ENCODE measurements at regions of chr20 and their contacts with region 1.

Region 1: GRCh38 chr20:63178889-63179686 is 36.8 kb downstream of the YTHDF1 start:
- ATAC-seq: peak; percentile 36 to 66 (median 50)
- H3K4me3 ChIP-seq: peak overlapping the region; percentile 55 to 96 (median 88)
- H3K27ac ChIP-seq: peak overlapping the region; percentile 88 to 94
- H3K4me1 ChIP-seq: peaks cover 45 to 56% of the 10 kb centered on the region in 2 donors

Region 2: GRCh38 chr20:62900052-62900691 is 278.9 kb before region 1 on chr20:
- in situ Hi-C with region 1: no loop called
- ATAC-seq: peak; percentile 86 to 94 (median 89)
- H3K4me3 ChIP-seq: no peak overlapping the region
- H3K27ac ChIP-seq: no peak overlapping the region
- H3K4me1 ChIP-seq: peaks cover 14 to 15% of the 10 kb centered on the region in 2 donors

Region 3: DNA sequence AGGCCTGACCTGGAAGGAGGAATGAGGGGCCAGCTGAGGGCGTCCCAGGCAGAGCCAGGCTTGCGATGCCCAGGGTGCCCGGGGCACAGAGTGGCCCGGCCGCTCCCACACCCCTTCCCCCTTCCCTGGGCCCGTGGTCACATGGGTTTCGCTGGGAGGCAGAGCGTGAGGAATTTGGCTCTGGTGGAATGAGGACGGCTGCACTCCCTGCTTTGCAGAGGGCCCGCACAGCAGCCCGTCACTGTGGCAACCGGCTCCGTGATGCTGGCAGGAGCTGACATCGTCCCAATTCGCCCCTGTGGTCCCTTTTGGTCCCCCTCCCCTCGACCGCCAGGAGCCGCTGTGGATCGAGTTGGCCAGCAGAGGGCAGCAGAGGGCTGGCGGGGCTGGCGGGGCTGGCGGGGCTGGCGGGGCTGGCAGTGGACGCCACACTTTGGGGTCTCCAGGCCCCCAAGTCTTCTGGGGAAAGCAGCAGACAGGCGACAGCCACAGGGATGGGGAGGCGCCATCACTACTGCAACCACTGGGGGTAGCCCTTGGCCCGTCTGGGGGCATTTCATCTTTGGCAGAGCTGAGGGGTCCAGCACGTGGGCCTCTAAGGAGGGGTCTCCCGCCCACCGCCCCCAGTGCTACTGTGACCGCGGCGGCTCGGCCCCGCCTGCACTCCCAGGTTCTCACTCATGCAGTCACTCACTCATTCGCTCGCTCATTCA is 122.7 kb before region 1 on chr20:
- in situ Hi-C with region 1: loop called in 4 of 9 experiments (anchors 10 to 25 kb)
- ATAC-seq: peak; percentile 28 to 91 (median 41)
- H3K4me3 ChIP-seq: peak overlapping the region in 2 of 5 donors; percentile 6 to 7
- H3K27ac ChIP-seq: no peak overlapping the region
- H3K4me1 ChIP-seq: peaks cover 26 to 39% of the 10 kb centered on the region in 2 donors

Region 4: GRCh38 chr20:63090682-63091579 is 88.2 kb before region 1 on chr20:
- in situ Hi-C with region 1: no loop called
- ATAC-seq: peak in 1 of 8 experiments; percentile 68
- H3K4me3 ChIP-seq: no peak overlapping the region
- H3K27ac ChIP-seq: no peak overlapping the region
- H3K4me1 ChIP-seq: peaks cover under 1 to 1% of the 10 kb centered on the region in 2 donors

Measured in motor neuron (in vitro differentiated cells).